ENCODE measurements at regions of chr7 and their contacts with region 1.

Region 1: GRCh38 chr7:24894429-24895221 is 85.4 kb downstream of the OSBPL3 start:
- DNase-seq: no peak
- H3K4me3 Mint-ChIP-seq: no peak overlapping the region
- H3K27ac Mint-ChIP-seq: no peak overlapping the region
- H3K4me1 Mint-ChIP-seq: peaks cover 61% of the 10 kb centered on the region
- H3K27me3 Mint-ChIP-seq: no peaks in the 10 kb centered on the region

Region 2: DNA sequence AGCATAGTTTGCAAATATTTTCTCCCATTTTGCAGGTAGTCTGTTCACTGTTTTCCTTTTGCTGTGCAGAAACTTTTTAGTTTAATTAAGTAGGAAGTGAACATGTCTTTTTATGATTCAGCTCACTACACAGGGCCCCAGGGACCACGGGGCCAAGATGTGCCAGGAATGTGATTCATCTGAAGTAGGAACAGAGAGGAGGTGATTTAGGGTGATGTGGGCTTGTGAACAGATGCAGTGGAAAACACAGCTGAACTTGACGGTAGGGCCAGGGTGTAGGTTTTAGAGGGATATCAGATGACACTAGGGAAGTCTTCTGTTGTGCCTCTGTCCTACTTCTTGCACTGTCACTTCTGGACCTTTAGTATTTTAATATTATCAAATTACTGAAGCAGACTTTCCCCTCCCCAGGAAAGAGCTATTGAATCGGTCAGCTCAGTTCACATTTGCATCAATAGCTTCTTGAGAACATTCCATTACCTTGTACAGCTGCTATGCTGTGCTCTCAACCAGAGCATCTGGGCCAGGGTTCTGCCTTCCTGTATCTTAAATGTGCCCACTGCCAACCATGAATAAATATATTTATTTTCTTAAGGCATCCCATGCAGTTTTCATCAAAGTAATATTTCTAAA is 11.5 kb before region 1 on chr7:
- intact Hi-C with region 1: loop called (anchors 2 kb)
- DNase-seq: no peak
- H3K4me3 Mint-ChIP-seq: no peak overlapping the region
- H3K27ac Mint-ChIP-seq: peak overlapping the region; percentile 53
- H3K4me1 Mint-ChIP-seq: peaks cover 79% of the 10 kb centered on the region
- H3K27me3 Mint-ChIP-seq: no peaks in the 10 kb centered on the region

Region 3: GRCh38 chr7:24921362-24921679 is 26.7 kb after region 1 on chr7:
- intact Hi-C with region 1: loop called (anchors 2 kb)
- DNase-seq: no peak
- H3K4me3 Mint-ChIP-seq: peak overlapping the region; percentile 41
- H3K27ac Mint-ChIP-seq: peak overlapping the region; percentile 91
- H3K4me1 Mint-ChIP-seq: peaks cover 93% of the 10 kb centered on the region
- H3K27me3 Mint-ChIP-seq: no peaks in the 10 kb centered on the region

Region 4: DNA sequence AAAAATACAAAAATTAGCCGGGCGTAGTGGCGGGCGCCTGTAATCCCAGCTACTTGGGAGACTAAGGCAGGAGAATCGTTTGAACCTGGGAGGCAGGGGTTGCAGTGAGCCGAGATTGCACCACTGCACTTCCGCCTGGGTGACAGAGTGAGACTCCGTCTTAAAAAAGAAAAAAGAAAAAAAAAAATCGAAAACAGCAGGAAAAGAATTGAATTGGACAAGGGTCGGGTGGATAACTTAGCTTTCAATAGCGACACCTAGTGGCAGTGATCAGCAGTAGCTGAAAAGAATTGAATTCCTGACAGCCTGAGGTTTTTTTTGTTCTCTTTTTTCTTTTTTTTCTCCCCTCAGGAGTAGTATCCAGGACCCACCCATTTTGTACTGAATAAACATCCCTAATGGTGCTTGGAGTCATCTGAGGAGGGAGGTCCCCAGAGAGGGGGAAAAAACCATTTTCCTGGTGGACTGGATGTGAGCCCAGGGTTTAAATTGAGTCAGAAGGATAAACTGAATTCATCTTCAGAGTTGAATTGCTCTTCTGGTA is 175.3 kb after region 1 on chr7:
- intact Hi-C with region 1: loop called (anchors 1 kb)
- DNase-seq: peak; percentile 20
- H3K4me3 Mint-ChIP-seq: no peak overlapping the region
- H3K27ac Mint-ChIP-seq: no peak overlapping the region
- H3K4me1 Mint-ChIP-seq: peaks cover 29% of the 10 kb centered on the region
- H3K27me3 Mint-ChIP-seq: no peaks in the 10 kb centered on the region

Region 5: DNA sequence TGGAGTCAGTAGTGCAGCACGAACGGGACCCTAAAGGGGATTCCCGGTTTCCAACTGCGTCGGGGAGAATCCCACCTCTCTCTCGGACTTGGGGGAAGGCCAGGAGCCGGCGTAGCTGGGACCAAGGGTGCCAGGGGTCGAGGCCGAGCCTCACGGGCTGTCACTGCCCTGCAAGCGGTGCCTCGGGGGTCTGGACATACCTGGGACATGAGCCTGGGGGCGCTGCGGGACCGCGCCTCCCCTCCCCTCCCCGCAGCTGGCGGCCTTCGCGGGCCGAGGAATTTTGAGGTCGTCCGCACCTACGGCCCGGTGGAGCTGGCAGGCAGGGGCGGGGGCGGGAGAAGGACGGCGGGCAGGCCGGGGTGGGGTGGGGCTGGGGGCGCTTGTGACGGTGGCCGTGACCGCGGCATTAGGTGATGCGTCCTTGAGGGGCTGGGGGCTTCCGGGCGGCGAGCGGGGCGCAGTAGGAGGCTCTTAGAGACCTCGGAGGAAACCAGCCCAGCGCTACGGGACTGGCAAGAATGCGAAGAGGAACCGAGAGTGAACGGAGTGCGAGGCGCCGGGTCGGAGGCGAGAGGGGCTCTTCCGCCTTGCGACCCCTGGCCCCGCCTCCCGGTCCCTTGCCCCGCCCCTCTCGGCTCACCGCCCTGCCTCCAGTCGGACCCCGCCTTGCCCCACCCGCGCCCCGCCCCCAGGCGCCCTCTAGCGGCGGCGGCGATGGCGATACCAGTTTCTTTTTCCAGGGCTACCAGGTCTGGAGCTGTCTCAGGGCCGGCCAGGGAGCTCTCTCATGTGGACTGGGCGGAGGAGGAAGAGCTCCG is 285.4 kb after region 1 on chr7:
- intact Hi-C with region 1: no loop called
- DNase-seq: peak; percentile 90
- H3K4me3 Mint-ChIP-seq: peak overlapping the region; percentile 84
- H3K27ac Mint-ChIP-seq: peak overlapping the region; percentile 83
- H3K4me1 Mint-ChIP-seq: peaks cover 13% of the 10 kb centered on the region
- H3K27me3 Mint-ChIP-seq: peaks cover 12% of the 10 kb centered on the region

Measured in activated T-helper 2 cell treated with anti-CD3 and anti-CD28 coated beads, Interferon-gamma antibody, Interleukin-2, Interleukin-4, amounts not matched to agents 10 μg/mL and 5 μg/mL and 100 μg/mL, durations not matched to agents 14 hours and 24 hours and 36 hours (primary cell).